ENCODE measurements at regions of chr3 and their contacts with region 1.

Region 1: DNA sequence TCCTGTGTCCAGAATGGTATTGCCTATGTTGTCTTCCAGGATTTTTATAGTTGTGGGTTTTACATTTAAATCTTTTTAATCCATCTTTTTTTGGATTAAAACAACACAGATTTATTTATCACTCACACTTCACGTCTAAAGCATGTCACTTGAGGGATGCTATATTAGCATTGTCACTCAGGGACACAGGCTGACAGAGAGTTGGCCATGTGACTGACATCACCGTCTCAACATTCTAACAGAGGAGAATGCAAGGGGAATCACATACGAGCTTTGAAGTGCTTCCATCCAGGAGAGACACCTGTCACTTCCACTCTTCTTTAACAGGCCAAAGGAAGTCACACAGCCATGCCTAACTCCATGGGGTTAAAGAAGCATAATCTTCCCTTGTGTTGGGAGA is 204.6 kb upstream of the AZI2 start:
- DNase-seq: no peak
- ATAC-seq: no peak
- H3K4me3 Mint-ChIP-seq: no peak overlapping the region
- H3K27ac Mint-ChIP-seq: no peak overlapping the region
- H3K4me1 Mint-ChIP-seq: no peaks in the 10 kb centered on the region
- H3K27me3 Mint-ChIP-seq: no peaks in the 10 kb centered on the region
- CTCF ChIP-seq: no peak

Region 2: DNA sequence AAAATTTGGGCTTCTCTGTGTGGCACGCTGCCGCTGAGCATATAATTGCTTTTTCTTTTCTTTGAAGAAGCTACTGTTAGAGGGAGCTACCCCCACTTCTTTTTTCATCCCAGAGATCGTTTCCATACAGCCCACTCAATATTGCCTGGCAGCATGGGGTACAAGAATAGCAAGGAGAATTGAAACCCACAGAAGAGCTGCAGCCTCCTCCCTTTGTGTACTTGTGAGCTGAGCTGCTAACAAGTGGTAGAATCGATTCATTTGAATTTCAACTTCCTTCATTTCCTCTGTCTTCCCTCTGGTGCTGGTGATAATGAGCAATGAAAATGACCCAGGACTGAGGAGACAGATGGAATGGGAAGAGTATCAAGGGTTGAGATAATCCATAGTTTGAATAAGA is 1865.7 kb before region 1 on chr3:
- CTCF ChIA-PET with region 1: no interaction called
- POLR2A ChIA-PET with region 1: no interaction called
- intact Hi-C with region 1: loop called (anchors 5 kb)
- DNase-seq: no peak
- ATAC-seq: no peak
- H3K4me3 Mint-ChIP-seq: no peak overlapping the region
- H3K27ac Mint-ChIP-seq: no peak overlapping the region
- H3K4me1 Mint-ChIP-seq: no peaks in the 10 kb centered on the region
- H3K27me3 Mint-ChIP-seq: no peaks in the 10 kb centered on the region
- CTCF ChIP-seq: no peak

Region 3: DNA sequence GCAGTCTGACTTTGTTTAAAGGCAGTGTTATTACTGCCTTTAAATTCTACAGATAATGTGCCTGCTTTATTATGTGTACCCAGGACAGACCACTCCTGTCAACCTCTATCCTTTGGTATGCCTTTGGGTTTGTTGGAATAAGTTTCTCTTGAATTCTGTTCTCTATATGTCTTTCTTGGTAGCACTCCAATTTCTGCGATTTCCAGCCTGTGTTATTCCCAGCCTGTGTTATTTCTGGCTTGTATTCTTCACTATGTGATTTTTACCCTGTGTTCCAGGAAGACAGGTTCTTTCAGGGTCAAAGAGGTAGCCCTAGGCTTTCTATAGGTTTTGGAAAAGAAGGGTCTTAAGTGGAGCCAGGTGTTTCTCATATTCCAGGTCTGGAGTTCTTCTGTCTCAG is 202.9 kb after region 1 on chr3:
- CTCF ChIA-PET with region 1: no interaction called
- POLR2A ChIA-PET with region 1: no interaction called
- intact Hi-C with region 1: no loop called
- DNase-seq: no peak
- ATAC-seq: no peak
- H3K4me3 Mint-ChIP-seq: no peak overlapping the region
- H3K27ac Mint-ChIP-seq: no peak overlapping the region
- H3K4me1 Mint-ChIP-seq: no peaks in the 10 kb centered on the region
- H3K27me3 Mint-ChIP-seq: no peaks in the 10 kb centered on the region
- CTCF ChIP-seq: no peak